Gastrocnemius medialis (tissue), 4 donors: ENCODE measurements at regions of chr5 and their contacts with region 1.

Region 1: GRCh38 chr5:123598028-123598689 is 86.2 kb downstream of the CSNK1G3 start:
- DNase-seq: no peak
- ATAC-seq: no peak
- H3K4me3 ChIP-seq: no peak overlapping the region
- H3K27ac ChIP-seq: no peak overlapping the region
- H3K4me1 ChIP-seq: no peaks in the 10 kb centered on the region
- H3K27me3 ChIP-seq: no peaks in the 10 kb centered on the region
- CTCF ChIP-seq: no peak
- POLR2A ChIP-seq: no peak

Region 2: DNA sequence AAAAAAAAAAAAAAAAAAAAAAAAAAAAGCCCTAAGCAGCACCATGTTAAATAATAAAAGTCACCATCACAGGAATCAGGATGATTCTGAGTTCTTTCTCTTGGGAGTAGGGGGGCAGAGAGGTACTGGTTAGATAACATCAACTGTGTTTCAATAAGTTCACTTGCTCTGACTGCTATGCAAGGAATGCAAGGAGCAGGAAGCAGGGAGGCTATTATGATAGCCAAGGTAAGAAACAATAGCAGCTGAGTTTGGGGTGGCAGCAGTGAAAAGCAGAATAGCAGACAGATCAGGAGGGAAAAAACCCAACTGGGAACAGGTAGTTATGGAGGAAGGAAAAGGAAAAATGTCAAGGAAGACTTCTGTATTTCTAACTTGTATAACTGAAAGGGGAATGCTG is 183.2 kb before region 1 on chr5:
- in situ Hi-C with region 1: loop called in 2 of 4 experiments (anchors 10 to 25 kb)
- intact Hi-C with region 1: no loop called
- DNase-seq: no peak
- ATAC-seq: no peak
- H3K4me3 ChIP-seq: no peak overlapping the region
- H3K27ac ChIP-seq: no peak overlapping the region
- H3K4me1 ChIP-seq: no peaks in the 10 kb centered on the region
- H3K27me3 ChIP-seq: no peaks in the 10 kb centered on the region
- CTCF ChIP-seq: no peak
- POLR2A ChIP-seq: no peak